HAP-1 (cell line): ENCODE measurements at regions of chr17 and their contacts with region 1.

Region 1: GRCh38 chr17:56939901-56940343 is 20.9 kb downstream of the COIL start:
- DNase-seq: peak in 1 of 2 experiments; percentile 51
- H3K4me3 ChIP-seq: no peak overlapping the region
- H3K4me1 ChIP-seq: no peaks in the 10 kb centered on the region; the same call in 1 of the 2 replicates
- H3K27me3 ChIP-seq: no peaks in the 10 kb centered on the region

Region 2: GRCh38 chr17:56592487-56593085 is 347.3 kb before region 1 on chr17:
- in situ Hi-C with region 1: loop called (anchors 25 kb)
- DNase-seq: peak; percentile 55 to 82
- H3K4me3 ChIP-seq: peak overlapping the region; percentile 63
- H3K4me1 ChIP-seq: peaks cover 11% of the 10 kb centered on the region
- H3K27me3 ChIP-seq: no peaks in the 10 kb centered on the region

Region 3: GRCh38 chr17:56819431-56820145 is 120.3 kb before region 1 on chr17:
- in situ Hi-C with region 1: loop called (anchors 5 kb)
- DNase-seq: peak; percentile 83 to 89
- H3K4me3 ChIP-seq: no peak overlapping the region
- H3K4me1 ChIP-seq: peaks cover 2% of the 10 kb centered on the region; the same call in 1 of the 2 replicates
- H3K27me3 ChIP-seq: no peaks in the 10 kb centered on the region